Adrenal gland (tissue), 19 donors: ENCODE measurements at regions of chr14 and their contacts with region 1.

Region 1: DNA sequence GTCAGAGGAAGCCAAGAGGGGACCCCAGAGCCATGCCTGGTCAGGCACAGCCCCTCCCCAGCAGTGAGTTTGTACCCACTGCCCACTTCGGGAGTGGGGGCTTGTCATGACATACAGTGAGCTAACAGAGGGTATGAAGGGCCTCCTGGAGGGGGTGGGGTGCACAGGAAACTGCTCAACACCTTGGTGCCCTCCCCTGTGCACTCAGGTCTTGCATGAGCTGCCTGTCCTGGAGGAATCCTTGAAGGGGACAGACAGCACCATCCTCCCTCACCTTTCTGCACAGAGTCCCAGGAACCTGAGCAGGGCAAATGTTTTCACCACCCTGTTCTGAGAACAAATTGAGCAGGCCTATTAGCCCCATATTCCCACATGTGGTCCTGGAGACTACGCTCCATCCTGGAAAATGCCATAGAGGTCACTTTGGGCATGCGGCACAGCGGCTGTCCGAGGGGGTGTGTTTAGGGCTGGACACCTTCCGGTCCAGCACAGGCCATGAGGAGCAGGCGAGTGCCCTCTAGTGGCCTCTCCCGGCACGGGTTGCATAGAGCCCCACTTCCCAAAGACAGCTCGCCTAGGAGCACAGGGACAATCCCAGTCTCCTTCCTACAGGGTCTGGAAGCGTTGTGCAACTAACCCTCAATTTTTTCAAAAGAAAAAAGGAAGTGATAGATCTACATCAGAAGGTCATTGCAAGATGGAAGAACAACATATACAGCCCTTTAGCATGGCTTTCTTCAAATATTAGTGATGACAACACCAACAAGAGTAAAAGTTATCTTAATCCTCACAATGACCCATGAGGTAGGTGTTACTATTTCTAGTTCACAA is 31.9 kb upstream of the ZFP36L1 start:
- DNase-seq: peak; percentile 87 to 95 (median 90)
- H3K4me3 ChIP-seq: peak overlapping the region in 1 of 4 donors; percentile 21
- H3K27ac ChIP-seq: no peak overlapping the region
- H3K4me1 ChIP-seq: peaks cover 0 to 5% of the 10 kb centered on the region in 2 donors
- H3K27me3 ChIP-seq: no peaks in the 10 kb centered on the region
- CTCF ChIP-seq: peak; percentile 76 to 92 (median 83)
- POLR2A ChIP-seq: no peak

Region 2: GRCh38 chr14:67883717-67884116 is 941.0 kb before region 1 on chr14:
- intact Hi-C with region 1: loop called in 1 of 2 experiments (anchors 10 kb)
- DNase-seq: no peak
- H3K4me3 ChIP-seq: no peak overlapping the region
- H3K27ac ChIP-seq: no peak overlapping the region
- H3K4me1 ChIP-seq: no peaks in the 10 kb centered on the region
- H3K27me3 ChIP-seq: no peaks in the 10 kb centered on the region
- CTCF ChIP-seq: peak; percentile 15 to 52 (median 34)
- POLR2A ChIP-seq: no peak

Region 3: GRCh38 chr14:67934008-67934481 is 890.7 kb before region 1 on chr14:
- intact Hi-C with region 1: loop called (anchors 5 kb)
- DNase-seq: peak in 4 of 7 donors; percentile 20 to 40 (median 26)
- H3K4me3 ChIP-seq: no peak overlapping the region
- H3K27ac ChIP-seq: peak overlapping the region in 1 of 5 donors; percentile 2
- H3K4me1 ChIP-seq: peaks cover 0 to 4% of the 10 kb centered on the region in 2 donors
- H3K27me3 ChIP-seq: no peaks in the 10 kb centered on the region
- CTCF ChIP-seq: peak; percentile 53 to 85 (median 72)
- POLR2A ChIP-seq: no peak